ENCODE measurements at regions of chr4 and their contacts with region 1.

Region 1: GRCh38 chr4:21469438-21470300 is 478.9 kb downstream of the KCNIP4 start:
- DNase-seq: peak in 1 of 2 experiments; percentile 20
- H3K4me3 ChIP-seq: no peak overlapping the region
- H3K4me3 Mint-ChIP-seq: no peak overlapping the region
- H3K27ac Mint-ChIP-seq: no peak overlapping the region
- H3K4me1 ChIP-seq: no peaks in the 10 kb centered on the region
- H3K4me1 Mint-ChIP-seq: no peaks in the 10 kb centered on the region
- H3K27me3 ChIP-seq: no peaks in the 10 kb centered on the region
- H3K27me3 Mint-ChIP-seq: peaks cover 3% of the 10 kb centered on the region
- CTCF ChIP-seq: peak; percentile 44 to 64

Region 2: DNA sequence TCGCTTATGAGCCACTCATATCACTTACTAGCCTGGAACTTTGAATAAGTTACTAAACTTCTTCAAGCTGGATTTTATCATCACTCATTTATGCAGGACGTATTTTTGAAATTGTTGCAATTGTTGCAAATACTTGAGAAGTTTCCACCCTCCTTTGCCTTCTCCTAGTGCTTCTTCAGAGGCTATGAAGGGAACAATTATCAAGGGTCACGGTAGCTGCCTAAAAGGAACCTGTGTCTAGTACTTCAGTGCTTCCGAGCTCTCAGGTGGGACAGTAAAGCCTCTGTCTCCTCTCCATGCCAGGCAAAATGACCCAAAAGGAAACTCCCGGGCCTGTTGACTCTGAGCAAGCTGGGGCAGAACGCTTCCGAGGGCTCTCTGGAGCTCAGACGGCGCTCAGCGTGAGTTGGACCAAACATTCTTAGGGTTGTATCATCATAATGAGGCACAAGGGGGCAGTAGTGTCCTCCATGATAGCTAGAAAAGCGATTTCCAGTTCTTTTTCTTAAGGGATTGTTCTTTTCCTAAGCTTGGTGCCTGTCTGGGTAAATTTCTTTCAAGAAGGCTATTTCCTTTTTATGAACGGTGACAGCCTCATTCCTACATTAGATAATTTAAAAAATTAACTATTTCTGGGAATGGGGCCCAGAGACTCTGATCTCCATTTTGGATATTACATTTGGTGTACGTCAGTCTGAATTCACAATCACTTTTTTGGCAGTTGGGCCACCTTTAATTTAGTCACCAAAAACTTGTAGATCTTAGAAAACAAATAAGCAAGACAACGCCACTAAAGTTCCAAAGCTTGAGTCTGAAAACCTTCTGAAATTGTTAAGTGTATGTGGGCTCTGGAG is 696.3 kb before region 1 on chr4:
- CTCF ChIA-PET with region 1: interaction called, 12 read pairs
- POLR2A ChIA-PET with region 1: no interaction called
- intact Hi-C with region 1: loop called (anchors 1 kb)
- DNase-seq: peak in 1 of 2 experiments; percentile 55
- H3K4me3 ChIP-seq: no peak overlapping the region
- H3K4me3 Mint-ChIP-seq: no peak overlapping the region
- H3K27ac Mint-ChIP-seq: no peak overlapping the region
- H3K4me1 ChIP-seq: no peaks in the 10 kb centered on the region
- H3K4me1 Mint-ChIP-seq: no peaks in the 10 kb centered on the region
- H3K27me3 ChIP-seq: no peaks in the 10 kb centered on the region
- H3K27me3 Mint-ChIP-seq: no peaks in the 10 kb centered on the region
- CTCF ChIP-seq: peak; percentile 48 to 51

Region 3: DNA sequence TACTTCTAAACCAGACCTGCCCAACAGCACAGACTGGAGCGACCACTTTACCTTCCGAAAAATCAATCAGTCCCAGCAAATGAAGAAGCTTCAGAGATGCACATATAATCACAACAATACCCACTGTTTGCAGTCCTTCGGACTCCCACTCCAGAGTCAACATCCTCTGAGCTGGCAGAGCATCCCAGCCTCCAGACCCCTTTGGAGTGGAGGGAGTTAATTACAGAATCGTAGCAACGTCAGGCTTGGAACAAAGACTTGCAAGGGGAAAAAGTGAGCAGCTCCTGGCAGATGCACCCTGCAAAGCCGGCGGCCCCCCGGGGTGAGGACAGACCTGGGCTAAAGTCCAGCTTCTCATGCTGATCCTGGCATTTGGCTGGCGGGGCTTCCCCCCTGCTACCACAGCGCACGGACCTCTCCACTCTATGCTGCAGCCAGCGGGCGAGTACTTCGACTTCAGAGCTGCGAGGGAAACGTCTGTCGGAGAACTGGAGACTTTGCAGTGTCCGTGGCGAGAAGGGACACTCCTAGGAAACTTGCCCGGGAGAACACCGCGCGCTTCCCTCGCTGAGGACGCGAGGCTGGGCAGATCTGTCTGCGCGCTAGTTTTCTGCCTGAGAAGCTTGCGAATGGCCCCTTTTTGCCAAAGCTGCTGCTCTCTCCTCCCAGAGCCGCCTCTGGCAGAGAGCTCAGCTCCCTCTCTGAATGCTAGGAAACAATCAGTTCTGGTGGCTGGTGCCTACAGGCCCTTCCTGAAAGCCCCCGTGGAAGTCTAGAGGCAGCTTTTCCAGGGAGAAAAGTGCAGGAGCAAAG is 485.7 kb before region 1 on chr4:
- CTCF ChIA-PET with region 1: no interaction called
- POLR2A ChIA-PET with region 1: no interaction called
- intact Hi-C with region 1: loop called (anchors 10 kb)
- DNase-seq: peak in 1 of 2 experiments; percentile 1
- H3K4me3 ChIP-seq: no peak overlapping the region
- H3K4me3 Mint-ChIP-seq: peak overlapping the region; percentile 22
- H3K27ac Mint-ChIP-seq: no peak overlapping the region
- H3K4me1 ChIP-seq: no peaks in the 10 kb centered on the region
- H3K4me1 Mint-ChIP-seq: no peaks in the 10 kb centered on the region
- H3K27me3 ChIP-seq: no peaks in the 10 kb centered on the region
- H3K27me3 Mint-ChIP-seq: peaks cover 10% of the 10 kb centered on the region
- CTCF ChIP-seq: no peak

Region 4: DNA sequence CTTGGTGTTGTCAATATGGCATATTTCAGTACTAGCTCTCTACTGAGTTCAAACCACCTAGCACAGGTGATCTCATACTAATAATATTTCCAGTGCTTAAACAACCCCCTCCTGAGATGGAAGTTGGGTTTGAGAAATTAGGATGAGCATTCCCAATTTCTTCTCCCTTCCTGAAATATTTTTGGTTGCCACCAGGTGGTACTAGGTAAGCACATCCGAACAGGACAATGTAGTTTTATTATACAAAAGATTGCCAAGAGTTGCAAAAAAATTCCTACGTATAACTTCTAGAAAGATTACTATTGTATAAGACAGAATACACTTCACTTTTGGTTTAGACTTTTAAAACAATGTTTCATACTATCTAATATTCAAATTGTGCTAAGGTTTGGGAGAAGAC is 284.9 kb before region 1 on chr4:
- CTCF ChIA-PET with region 1: interaction called, 5 read pairs
- POLR2A ChIA-PET with region 1: no interaction called
- intact Hi-C with region 1: loop called (anchors 1 kb)
- DNase-seq: peak in 1 of 2 experiments; percentile 25
- H3K4me3 ChIP-seq: no peak overlapping the region
- H3K4me3 Mint-ChIP-seq: no peak overlapping the region
- H3K27ac Mint-ChIP-seq: no peak overlapping the region
- H3K4me1 ChIP-seq: no peaks in the 10 kb centered on the region; the same call in 1 of the 2 replicates
- H3K4me1 Mint-ChIP-seq: no peaks in the 10 kb centered on the region
- H3K27me3 ChIP-seq: no peaks in the 10 kb centered on the region; the same call in 1 of the 2 replicates
- H3K27me3 Mint-ChIP-seq: peaks cover 3% of the 10 kb centered on the region
- CTCF ChIP-seq: peak; percentile 29 to 45

Region 5: GRCh38 chr4:21522296-21522695 is 52.6 kb after region 1 on chr4:
- CTCF ChIA-PET with region 1: no interaction called
- POLR2A ChIA-PET with region 1: no interaction called
- intact Hi-C with region 1: no loop called
- DNase-seq: no peak
- H3K4me3 ChIP-seq: no peak overlapping the region
- H3K4me3 Mint-ChIP-seq: no peak overlapping the region
- H3K27ac Mint-ChIP-seq: no peak overlapping the region
- H3K4me1 ChIP-seq: no peaks in the 10 kb centered on the region
- H3K4me1 Mint-ChIP-seq: no peaks in the 10 kb centered on the region
- H3K27me3 ChIP-seq: no peaks in the 10 kb centered on the region
- H3K27me3 Mint-ChIP-seq: peaks cover 4% of the 10 kb centered on the region
- CTCF ChIP-seq: no peak

Region 6: GRCh38 chr4:21569638-21570037 is 100.0 kb after region 1 on chr4:
- CTCF ChIA-PET with region 1: no interaction called
- POLR2A ChIA-PET with region 1: no interaction called
- intact Hi-C with region 1: no loop called
- DNase-seq: no peak
- H3K4me3 ChIP-seq: no peak overlapping the region
- H3K4me3 Mint-ChIP-seq: no peak overlapping the region
- H3K27ac Mint-ChIP-seq: no peak overlapping the region
- H3K4me1 ChIP-seq: no peaks in the 10 kb centered on the region
- H3K4me1 Mint-ChIP-seq: no peaks in the 10 kb centered on the region
- H3K27me3 ChIP-seq: no peaks in the 10 kb centered on the region
- H3K27me3 Mint-ChIP-seq: no peaks in the 10 kb centered on the region
- CTCF ChIP-seq: no peak

Region 7: DNA sequence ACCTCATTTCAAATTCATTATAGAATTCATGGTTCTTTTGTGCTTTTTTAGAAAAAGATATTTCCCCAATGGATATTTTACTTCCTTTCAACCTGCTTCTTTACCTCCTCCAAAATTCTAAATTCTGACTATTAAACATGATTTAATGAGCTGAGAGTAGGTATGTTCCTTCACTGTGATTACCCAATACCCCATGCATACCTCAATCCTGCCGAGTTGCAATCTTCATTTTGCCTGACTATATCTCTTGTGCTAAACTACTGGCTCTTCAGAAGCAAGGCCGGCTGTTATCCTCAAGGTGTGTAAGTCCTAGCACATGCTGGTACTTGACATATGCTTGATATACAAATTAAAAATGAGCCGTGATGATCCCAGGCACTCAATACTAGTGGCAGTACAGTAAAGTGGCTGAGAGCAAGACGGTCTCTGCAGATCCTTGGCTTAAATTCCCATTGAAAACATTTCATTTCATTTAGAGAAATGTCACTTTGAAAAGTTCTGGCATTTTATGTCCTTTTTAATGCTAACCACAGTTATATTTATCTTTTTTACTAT is 158.5 kb after region 1 on chr4:
- CTCF ChIA-PET with region 1: no interaction called
- POLR2A ChIA-PET with region 1: no interaction called
- intact Hi-C with region 1: no loop called
- DNase-seq: no peak
- H3K4me3 ChIP-seq: no peak overlapping the region
- H3K4me3 Mint-ChIP-seq: no peak overlapping the region
- H3K27ac Mint-ChIP-seq: no peak overlapping the region
- H3K4me1 ChIP-seq: no peaks in the 10 kb centered on the region
- H3K4me1 Mint-ChIP-seq: no peaks in the 10 kb centered on the region
- H3K27me3 ChIP-seq: no peaks in the 10 kb centered on the region
- H3K27me3 Mint-ChIP-seq: peaks cover 14% of the 10 kb centered on the region
- CTCF ChIP-seq: no peak

Region 8: DNA sequence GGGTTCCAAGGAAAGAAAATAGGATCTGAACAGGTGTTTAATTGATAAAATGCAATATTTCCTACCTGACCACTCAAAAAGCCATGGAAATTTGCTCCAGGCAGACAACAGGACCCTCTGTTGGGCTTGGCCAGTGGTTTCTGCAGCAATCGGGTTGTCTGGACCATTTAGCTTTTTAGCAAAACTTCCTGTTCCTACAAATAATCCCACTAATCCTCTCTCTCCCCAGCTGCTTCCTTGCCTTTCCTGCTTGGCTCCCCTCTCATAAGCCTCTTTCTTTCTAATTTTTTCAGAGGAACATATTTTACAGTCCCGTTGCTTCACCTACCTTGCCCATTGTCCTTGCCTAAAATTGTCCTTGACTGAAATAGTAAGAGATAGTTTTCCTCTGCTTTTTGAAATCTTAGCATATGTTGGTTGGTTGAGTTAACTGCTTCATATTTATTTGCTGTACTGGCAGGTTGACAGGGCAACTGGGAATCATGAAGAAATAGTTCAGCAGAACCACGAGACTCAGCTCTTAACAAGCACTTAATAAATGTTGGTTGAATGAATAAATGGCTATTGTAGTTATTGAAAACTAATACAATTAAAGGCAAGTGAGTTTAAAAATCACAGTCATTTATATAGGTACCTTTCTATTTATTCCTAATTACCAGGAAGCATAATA is 219.1 kb after region 1 on chr4:
- CTCF ChIA-PET with region 1: no interaction called
- POLR2A ChIA-PET with region 1: no interaction called
- intact Hi-C with region 1: no loop called
- DNase-seq: no peak
- H3K4me3 ChIP-seq: no peak overlapping the region
- H3K4me3 Mint-ChIP-seq: no peak overlapping the region
- H3K27ac Mint-ChIP-seq: no peak overlapping the region
- H3K4me1 ChIP-seq: no peaks in the 10 kb centered on the region
- H3K4me1 Mint-ChIP-seq: no peaks in the 10 kb centered on the region
- H3K27me3 ChIP-seq: no peaks in the 10 kb centered on the region
- H3K27me3 Mint-ChIP-seq: peaks cover 3% of the 10 kb centered on the region
- CTCF ChIP-seq: no peak

Measured in Caco-2 (cell line).